ENCODE measurements at regions of chr1 and their contacts with region 1.

Region 1: GRCh38 chr1:58515794-58516401 is 30.6 kb downstream of the OMA1 start:
- DNase-seq: peak; percentile 60 to 80 (median 60)
- ATAC-seq: peak; percentile 76
- H3K4me3 ChIP-seq: no peak overlapping the region
- H3K27ac ChIP-seq: no peak overlapping the region
- H3K4me1 ChIP-seq: no peaks in the 10 kb centered on the region
- H3K27me3 ChIP-seq: no peaks in the 10 kb centered on the region
- CTCF ChIP-seq: peak; percentile 56 to 77 (median 57)
- EP300 ChIP-seq: no peak
- POLR2A ChIP-seq: no peak
- RAD21 ChIP-seq: peak; percentile 83 to 87

Region 2: DNA sequence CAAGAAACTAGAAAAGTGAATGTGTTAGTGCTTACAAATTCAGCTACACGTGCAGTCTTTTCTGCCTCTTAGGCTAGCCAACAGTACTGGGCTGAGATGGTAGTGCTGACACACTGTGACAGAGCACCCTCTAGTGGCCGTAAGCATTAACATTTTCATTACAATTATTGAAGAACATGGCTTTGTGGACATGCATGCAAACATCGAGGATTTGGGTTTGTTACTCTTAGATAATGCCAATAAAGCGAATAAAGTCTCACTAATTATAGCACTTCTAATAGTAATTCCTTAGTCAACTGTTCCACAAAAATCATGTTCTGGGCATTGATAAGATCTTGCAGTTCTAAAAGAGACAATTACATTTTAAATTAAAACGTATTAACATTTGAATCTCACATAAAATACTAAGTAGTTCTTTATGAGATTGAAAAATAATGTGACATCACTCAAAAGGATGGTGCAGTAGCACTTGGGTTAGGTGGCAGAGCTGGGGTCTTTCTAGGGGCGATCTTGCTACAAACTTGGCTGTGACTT is 136.8 kb after region 1 on chr1:
- CTCF ChIA-PET with region 1: interaction called, 19 read pairs
- POLR2A ChIA-PET with region 1: interaction called, 3 read pairs
- in situ Hi-C with region 1: loop called (anchors 5 kb)
- intact Hi-C with region 1: loop called (anchors 1 kb)
- DNase-seq: peak; percentile 64 to 80 (median 74)
- ATAC-seq: peak; percentile 96
- H3K4me3 ChIP-seq: no peak overlapping the region
- H3K27ac ChIP-seq: no peak overlapping the region
- H3K4me1 ChIP-seq: peaks cover 0 to 6% of the 10 kb centered on the region in 2 experiments; a peak in 2 of 5 replicates
- H3K27me3 ChIP-seq: no peaks in the 10 kb centered on the region
- CTCF ChIP-seq: peak; percentile 76 to 89 (median 76)
- EP300 ChIP-seq: no peak
- POLR2A ChIP-seq: no peak; the same call in 1 of the 2 replicates
- RAD21 ChIP-seq: peak; percentile 81 to 85

Region 3: DNA sequence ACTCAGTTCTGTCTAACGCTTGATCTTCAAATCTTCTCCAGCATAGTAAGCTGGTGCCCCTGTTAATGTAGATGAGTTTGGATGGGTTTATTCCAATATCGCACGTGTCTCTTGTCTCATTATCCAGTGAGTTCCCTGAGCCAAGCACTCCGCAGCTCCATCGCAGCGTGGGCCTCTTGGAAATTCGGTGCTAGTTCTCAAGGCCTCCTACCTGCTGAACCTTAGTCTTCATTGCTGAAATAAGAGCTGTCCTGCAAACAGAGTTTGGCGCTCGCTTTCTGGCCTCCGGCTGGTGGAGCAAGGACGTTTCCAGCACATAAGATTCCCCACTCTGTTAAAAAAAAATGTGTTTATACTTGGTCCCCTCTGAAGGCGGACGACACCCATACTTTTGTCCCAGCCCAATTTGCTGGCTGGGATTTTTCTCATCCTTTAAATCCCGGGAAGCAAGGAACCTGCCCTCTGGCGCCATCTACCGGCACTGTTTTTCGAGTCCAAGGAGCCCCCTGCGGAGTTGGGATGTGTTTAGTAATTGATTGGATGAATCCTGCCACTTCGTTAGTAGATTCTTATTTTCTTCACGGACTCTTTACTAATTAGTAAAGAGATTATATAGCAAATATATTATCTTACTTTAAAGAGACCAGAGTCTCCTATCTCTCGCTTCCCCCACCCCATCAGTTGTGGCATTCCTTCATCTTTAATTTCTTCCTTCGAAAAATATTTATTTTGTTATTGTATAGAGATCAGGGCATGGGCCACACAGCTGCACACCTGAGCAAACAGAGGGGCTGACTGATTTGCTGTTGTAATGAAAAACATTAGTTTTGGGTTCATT is 253.3 kb after region 1 on chr1:
- CTCF ChIA-PET with region 1: interaction called, 4 read pairs
- POLR2A ChIA-PET with region 1: no interaction called
- in situ Hi-C with region 1: no loop called
- intact Hi-C with region 1: loop called (anchors 10 kb)
- DNase-seq: peak; percentile 67 to 75 (median 74)
- ATAC-seq: peak; percentile 87
- H3K4me3 ChIP-seq: no peak overlapping the region
- H3K27ac ChIP-seq: no peak overlapping the region
- H3K4me1 ChIP-seq: no peaks in the 10 kb centered on the region
- H3K27me3 ChIP-seq: peaks cover 11 to 12% of the 10 kb centered on the region in 2 experiments; a peak in 4 of 5 replicates
- CTCF ChIP-seq: peak; percentile 77 to 86 (median 82)
- EP300 ChIP-seq: no peak
- POLR2A ChIP-seq: no peak
- RAD21 ChIP-seq: peak; percentile 78 to 80

Region 4: DNA sequence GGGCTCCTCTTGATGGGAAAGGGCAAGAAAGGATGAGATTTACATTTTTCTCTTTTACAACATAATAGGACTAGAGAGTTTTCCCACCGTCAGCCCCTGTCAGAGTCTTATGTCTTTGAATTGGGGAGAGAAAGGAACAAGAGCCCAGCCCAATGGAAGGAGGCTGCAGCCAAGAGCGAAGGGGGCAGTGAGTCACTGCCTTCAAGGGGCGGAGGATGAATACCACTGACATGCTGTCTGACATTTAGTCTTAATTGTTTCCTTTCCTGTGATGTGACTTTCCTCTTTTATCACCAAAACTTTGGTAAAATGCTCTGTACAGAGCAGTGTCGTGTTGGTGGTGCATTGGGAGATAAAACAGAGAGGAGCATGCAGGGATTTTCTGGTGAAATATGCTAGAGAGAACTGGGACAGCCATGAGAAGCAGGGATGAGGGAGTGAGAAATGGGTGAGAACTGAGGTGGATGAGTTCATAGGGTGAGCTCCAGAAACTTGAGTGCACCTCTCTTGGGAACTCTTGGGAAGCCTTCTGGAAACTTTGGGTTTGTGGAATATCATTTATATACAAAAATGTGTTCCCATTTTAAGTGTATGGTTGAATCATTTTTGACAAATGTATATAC is 601.1 kb after region 1 on chr1:
- CTCF ChIA-PET with region 1: no interaction called
- POLR2A ChIA-PET with region 1: no interaction called
- in situ Hi-C with region 1: no loop called
- intact Hi-C with region 1: no loop called
- DNase-seq: peak in 1 of 4 experiments; percentile 12
- ATAC-seq: no peak
- H3K4me3 ChIP-seq: no peak overlapping the region
- H3K27ac ChIP-seq: no peak overlapping the region
- H3K4me1 ChIP-seq: no peaks in the 10 kb centered on the region
- H3K27me3 ChIP-seq: no peaks in the 10 kb centered on the region; a peak in 2 of 5 replicates
- CTCF ChIP-seq: no peak
- EP300 ChIP-seq: no peak
- POLR2A ChIP-seq: no peak
- RAD21 ChIP-seq: no peak

Region 5: DNA sequence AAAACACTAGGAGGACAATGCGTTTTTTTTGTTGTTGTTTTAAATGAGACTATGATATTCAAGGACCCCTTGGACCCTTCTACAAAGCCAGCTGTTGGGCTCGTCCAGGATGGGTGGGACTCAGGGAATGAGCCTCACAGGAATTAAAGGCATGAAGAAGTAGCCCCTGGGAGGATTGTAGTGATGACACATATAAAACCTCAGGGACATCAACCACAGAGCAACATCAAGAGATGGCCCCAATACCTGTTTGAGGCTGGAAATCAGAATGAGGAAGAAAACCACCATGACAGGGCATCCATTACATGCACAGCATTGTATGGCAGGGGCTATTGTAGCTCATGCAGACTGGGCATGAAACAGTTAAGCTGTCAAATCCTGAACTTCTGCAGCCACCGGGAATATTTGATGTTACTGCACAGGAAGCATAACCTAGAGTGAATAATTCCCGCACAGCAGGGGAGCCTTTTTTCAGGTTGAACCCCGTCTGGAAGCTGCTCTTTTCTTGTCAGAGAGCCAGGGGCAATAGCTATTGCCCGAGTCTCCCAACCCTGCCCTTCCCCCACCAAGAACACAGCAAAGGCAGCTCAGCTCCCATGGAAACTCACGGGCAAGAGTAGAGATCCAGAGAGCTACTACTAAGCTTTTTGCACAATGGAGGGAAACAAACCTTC is 640.8 kb after region 1 on chr1:
- CTCF ChIA-PET with region 1: no interaction called
- POLR2A ChIA-PET with region 1: no interaction called
- in situ Hi-C with region 1: no loop called
- intact Hi-C with region 1: no loop called
- DNase-seq: no peak
- ATAC-seq: no peak
- H3K4me3 ChIP-seq: no peak overlapping the region
- H3K27ac ChIP-seq: no peak overlapping the region
- H3K4me1 ChIP-seq: no peaks in the 10 kb centered on the region
- H3K27me3 ChIP-seq: no peaks in the 10 kb centered on the region
- CTCF ChIP-seq: no peak
- EP300 ChIP-seq: no peak
- POLR2A ChIP-seq: no peak
- RAD21 ChIP-seq: no peak

Region 6: DNA sequence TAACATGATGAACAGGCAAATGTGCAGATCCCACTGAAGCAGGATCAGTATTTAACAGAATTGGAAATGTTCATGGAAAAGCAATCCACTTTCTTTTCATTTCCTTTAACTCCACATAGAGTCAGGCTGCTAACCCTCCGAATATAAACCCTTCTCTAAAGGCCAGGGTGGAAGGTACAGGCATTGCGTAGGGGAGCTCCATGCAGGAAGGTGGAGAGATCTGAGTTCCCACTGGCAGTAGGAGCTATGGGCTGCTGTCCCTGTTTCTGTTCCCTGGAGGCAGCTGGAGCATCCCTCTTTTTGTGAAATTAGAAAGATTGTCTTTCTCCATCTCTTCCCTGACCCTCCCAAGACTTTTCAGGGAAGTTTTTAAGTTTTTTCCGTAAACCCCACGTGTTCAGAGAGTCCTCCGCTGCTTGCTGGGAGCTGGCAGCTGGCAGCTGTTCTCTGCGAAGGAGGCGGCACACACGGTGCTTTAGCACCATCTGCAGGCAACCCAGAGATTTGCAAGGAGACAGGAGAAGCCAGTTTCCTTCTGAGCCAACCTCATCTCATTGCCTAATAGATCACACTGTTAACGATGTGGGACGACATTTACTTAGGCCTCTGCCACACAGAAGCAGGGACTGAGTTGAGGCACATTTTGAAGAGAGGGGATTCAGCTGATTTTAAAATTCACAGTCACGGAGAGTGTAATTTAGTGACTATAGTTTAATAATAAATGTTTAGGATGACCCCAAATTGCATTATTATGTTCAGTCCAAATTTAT is 1243.4 kb after region 1 on chr1:
- CTCF ChIA-PET with region 1: interaction called, 6 read pairs
- POLR2A ChIA-PET with region 1: no interaction called
- in situ Hi-C with region 1: loop called (anchors 25 kb)
- intact Hi-C with region 1: loop called (anchors 5 kb)
- DNase-seq: peak; percentile 72 to 76 (median 75)
- ATAC-seq: peak; percentile 94
- H3K4me3 ChIP-seq: no peak overlapping the region
- H3K27ac ChIP-seq: no peak overlapping the region
- H3K4me1 ChIP-seq: no peaks in the 10 kb centered on the region
- H3K27me3 ChIP-seq: no peaks in the 10 kb centered on the region; a peak in 1 of 5 replicates
- CTCF ChIP-seq: peak; percentile 72 to 91 (median 90)
- EP300 ChIP-seq: no peak
- POLR2A ChIP-seq: no peak
- RAD21 ChIP-seq: peak; percentile 92 to 94